AG04450 (cell line): ENCODE measurements at regions of chr11 and their contacts with region 1.

Region 1: DNA sequence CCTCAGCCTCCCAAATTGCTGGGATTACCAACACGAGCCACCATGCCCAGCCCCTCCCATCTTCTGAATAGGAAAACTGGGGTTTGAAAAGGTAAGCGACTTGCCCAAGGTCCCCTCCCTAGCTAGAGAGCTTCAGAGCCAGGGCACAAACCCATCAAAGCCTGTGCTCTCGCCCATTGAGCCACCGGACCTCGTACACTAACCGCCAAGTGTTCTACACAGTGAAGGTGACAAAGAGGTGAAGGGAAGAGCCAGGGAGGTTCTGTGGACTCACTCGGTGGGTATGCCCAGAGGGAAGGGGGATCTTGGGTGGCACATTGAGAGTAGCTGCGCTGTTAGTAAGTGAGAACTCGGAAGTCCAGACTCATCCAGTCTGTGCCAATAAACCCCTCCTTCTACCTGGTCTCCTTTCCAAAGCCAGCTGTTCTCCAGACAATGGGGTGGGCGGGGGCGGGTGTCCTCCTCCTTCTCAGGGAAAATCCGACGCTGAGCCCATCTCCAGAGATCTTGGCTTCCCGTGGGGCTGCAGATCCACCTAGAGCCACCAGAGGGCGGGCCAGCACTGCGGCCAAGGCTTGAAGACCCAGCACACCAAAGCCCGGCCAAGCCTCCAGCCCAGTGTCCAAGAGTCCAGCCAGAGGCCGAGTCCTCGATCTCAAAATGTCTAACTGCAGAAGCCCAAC is 3.2 kb upstream of the RTN4RL2 start:
- DNase-seq: peak; percentile 59
- H3K4me3 ChIP-seq: no peak overlapping the region
- H3K27ac ChIP-seq: no peak overlapping the region
- H3K27me3 ChIP-seq: peaks cover 42% of the 10 kb centered on the region
- CTCF ChIP-seq: peak; percentile 98

Region 2: GRCh38 chr11:57345555-57346211 is 111.4 kb before region 1 on chr11:
- CTCF ChIA-PET with region 1: interaction called, 19 read pairs
- POLR2A ChIA-PET with region 1: no interaction called
- DNase-seq: no peak
- H3K4me3 ChIP-seq: no peak overlapping the region
- H3K27ac ChIP-seq: no peak overlapping the region
- H3K27me3 ChIP-seq: peaks cover 7% of the 10 kb centered on the region
- CTCF ChIP-seq: peak; percentile 65

Region 3: DNA sequence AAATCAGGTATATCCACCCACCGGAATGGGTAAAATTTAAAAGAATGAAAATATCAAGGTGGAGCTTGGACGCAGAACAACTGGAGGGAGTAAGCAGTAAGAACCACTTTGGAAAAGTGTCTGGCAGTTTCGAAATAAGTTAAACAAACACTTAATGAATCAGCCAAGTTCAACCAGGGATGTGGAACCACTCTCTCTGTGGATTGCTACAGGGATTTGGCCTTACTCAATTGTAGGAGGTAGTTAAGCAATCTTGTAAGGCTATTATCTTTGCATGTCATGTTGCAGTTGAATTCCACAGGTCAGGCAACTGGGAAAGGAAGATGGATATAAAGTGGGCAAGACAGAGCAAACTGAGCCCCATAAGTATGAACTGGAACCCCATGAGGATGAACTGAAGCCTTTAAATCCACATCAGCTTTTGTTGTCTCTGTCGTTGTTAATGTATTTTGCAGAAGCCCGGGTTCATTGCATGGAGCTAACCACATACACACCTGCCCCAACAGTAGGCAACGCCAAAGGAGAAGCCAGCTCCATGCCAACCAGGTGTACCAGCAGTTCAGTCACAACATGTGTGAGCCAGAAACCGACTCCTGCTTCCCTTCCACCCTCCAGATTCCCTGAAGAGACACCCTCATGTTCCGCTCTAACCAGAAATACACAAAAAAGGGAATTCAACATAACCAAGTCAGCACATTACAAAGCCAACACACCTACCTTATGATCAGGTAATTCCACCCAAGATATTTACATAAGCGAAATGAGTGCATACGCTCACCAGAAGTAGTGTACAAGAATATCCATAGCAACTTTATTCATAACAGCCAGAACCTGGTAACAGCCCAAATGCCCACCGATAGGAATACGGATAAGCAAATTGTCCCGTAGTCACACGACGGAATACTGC is 22.2 kb before region 1 on chr11:
- CTCF ChIA-PET with region 1: interaction called, 68 read pairs
- POLR2A ChIA-PET with region 1: no interaction called
- DNase-seq: peak; percentile 86
- H3K4me3 ChIP-seq: no peak overlapping the region
- H3K27ac ChIP-seq: peak overlapping the region; percentile 41
- H3K27me3 ChIP-seq: no peaks in the 10 kb centered on the region
- CTCF ChIP-seq: no peak

Region 4: DNA sequence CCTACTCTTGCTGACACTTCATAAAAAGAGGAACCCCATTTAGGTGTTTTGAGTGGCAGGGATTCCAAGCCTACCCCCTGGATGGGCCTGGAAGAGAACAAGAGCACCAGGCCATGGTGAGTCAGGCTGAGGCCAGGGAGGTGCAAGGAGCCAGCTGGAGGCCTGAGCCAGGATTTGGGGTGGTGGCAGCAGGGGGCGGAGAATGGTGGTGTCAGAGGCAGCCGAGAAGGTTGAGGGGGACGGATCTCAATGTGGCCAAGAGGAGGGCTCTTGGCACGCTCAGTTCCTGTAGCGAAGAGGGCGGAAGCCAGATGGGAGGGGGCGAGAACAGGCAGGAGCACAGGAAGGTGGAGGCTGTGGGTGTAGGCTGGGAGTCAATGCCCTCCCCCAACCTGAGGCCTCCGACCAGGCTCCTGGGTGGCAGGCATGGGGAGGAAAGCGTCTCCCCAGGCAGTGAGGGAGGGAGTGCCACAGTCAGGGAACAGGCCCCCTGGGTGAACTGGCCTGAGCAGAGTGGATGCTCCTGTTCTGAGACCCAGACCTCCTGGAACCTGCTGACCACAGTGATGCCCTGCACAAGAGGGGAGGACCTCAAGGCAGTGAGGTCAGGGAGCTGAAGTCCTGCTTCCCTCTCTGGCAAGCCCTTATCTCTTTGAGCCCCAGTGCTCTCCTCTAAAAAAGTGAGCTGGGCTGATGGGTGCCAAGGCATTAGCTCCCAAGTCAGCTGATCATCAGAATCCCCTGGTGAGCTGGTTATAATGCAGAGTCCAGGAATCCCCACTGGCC is 17.1 kb after region 1 on chr11:
- CTCF ChIA-PET with region 1: interaction called, 115 read pairs
- POLR2A ChIA-PET with region 1: no interaction called
- DNase-seq: no peak
- H3K4me3 ChIP-seq: no peak overlapping the region
- H3K27ac ChIP-seq: no peak overlapping the region
- H3K27me3 ChIP-seq: peaks cover 16% of the 10 kb centered on the region
- CTCF ChIP-seq: no peak

Region 5: DNA sequence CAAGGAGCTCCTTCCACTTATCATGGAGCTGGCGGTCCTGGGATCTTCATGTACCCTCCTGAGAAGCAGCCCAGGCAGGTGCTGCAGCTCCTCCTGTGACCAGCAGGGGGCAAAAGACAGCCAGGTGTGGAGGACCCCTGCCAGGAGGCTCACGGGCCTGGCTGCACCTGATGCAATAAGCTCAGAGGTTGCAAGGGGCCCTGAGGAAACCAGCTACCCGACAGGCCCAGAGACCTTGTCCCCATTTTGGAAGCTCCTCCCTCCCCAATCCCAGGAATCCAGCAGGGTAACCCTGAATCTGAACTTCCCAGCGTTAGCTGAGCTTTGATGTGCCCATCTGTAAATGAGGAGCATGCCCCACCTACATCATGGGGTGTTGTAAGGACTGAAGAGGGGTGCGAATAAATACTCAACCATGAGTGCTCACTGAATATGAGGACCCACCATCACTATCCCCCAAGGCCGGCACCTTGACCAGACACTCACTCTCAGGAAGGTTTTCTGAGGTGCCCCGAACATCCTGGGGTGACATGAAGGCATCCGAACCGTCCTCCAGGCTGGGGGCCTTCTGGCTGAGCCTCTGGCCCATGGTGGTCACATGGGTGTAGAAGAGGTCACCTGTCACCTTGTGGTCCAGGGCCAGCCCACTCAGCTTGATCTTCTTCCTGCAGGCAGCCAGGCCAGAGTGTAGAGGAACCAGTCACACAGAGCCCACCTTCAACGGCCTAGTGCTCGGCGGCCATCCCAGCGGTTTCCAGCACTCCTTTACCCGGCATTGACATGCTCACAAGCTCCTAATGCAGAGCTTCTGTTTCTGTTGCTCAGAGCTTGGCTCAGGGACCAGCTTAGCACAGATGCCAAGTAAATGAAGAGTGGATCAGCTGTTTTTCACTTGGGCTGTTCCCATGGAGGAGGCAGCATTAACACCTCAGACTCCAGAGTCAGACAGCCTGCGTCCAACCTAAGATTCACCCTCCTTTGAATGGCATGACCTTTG is 36.7 kb after region 1 on chr11:
- CTCF ChIA-PET with region 1: interaction called, 31 read pairs
- POLR2A ChIA-PET with region 1: no interaction called
- DNase-seq: no peak
- H3K4me3 ChIP-seq: no peak overlapping the region
- H3K27ac ChIP-seq: peak overlapping the region; percentile 31
- H3K27me3 ChIP-seq: no peaks in the 10 kb centered on the region
- CTCF ChIP-seq: peak; percentile 87

Region 6: DNA sequence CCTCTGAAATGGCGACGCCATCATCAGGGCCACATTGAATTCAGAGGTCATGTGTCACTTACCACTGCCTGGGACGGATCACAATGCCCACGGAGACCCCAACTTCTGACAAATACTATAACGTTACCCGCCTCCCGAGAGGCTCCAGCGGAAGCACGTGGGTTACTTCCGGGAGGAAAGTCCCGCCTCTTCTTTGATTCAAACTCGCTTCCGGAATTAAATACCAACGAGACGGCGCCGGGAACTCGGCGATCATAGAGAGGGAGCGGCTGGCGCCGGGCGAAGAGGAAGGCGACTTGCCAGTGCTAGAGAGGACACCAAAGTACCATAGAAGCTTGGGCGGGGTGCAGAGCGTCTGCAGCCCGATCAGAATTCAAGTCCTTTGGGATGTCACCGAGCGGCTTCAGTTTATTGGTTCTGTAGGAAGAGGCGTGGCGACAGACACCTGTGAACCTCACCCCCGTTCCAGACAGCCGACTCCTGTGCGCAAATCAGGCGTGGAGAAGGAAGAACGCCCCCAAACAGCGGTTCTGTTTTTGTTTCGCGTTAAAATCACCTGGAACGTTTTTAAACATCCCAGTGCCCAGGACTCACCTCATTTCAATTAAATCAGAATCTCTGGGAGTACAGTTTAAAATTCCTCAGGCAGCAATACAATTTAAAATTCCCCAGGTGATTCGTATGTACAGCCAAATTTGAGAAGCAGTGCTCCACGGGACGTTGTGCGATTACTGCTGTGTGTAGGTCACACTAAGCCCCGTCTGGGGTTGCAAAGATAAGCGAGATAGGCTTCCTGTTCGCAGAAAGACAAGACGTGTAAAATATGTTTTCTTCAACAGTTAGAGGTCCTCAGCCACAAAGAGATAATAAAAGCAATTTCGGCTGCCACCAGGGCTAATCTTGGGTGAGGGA is 73.8 kb after region 1 on chr11 and contains the start of gene TIMM10:
- CTCF ChIA-PET with region 1: interaction called, 215 read pairs
- POLR2A ChIA-PET with region 1: no interaction called
- DNase-seq: peak; percentile 86
- H3K4me3 ChIP-seq: peak within 1 kb of the TSS; percentile 99
- H3K27ac ChIP-seq: no peak within 1 kb of the TSS
- H3K27me3 ChIP-seq: peaks cover 5% of the 10 kb centered on the region
- CTCF ChIP-seq: no peak
- polyA plus RNA-seq, gene TIMM10: 76.6 and 82.8 TPM in 2 replicates

Region 7: DNA sequence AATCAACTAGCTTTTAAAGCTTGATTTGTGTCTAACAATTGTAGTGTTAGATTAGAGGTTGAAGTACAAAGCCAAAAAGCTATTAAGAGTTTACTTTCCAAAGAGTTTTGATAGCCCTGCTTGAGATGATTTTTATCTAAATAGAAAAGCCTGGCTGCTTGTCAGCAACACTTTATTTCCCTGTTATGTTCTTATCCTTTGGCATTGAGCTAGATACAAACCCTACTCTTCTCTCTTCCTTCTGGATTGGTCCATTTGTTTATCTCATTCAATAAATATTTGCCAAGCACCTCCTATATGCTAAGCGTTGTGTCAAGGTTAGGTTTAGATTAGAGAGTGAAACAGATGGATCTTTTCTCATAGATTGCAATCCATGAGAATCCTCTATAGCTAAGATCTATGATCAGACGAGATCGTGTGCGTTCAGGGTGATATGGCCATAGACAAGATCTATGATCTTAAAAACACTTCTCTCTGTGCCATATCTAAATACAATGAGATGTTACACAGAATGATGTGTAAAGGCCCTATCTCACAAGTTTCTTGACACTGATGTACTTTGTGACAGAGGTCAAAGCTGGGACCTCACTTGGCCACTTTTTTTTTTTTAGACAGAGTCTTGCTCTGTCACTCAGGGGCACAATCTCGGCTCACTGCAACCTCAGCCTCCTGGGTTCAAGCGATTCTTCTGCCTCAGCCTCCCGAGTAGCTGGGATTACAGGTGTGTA is 362.3 kb after region 1 on chr11:
- CTCF ChIA-PET with region 1: no interaction called
- POLR2A ChIA-PET with region 1: no interaction called
- DNase-seq: no peak
- H3K4me3 ChIP-seq: no peak overlapping the region
- H3K27ac ChIP-seq: no peak overlapping the region
- H3K27me3 ChIP-seq: no peaks in the 10 kb centered on the region
- CTCF ChIP-seq: no peak